ENCODE measurements at regions of chr2 and their contacts with region 1.

Region 1: GRCh38 chr2:153347818-153348495 is 130.6 kb downstream of the RPRM start:
- H3K4me3 ChIP-seq: no peak overlapping the region
- H3K27ac ChIP-seq: no peak overlapping the region
- H3K4me1 ChIP-seq: no peaks in the 10 kb centered on the region
- CTCF ChIP-seq: no peak

Region 2: GRCh38 chr2:153420394-153420793 is 72.4 kb after region 1 on chr2:
- CTCF ChIA-PET with region 1: no interaction called
- POLR2A ChIA-PET with region 1: no interaction called
- H3K4me3 ChIP-seq: no peak overlapping the region
- H3K27ac ChIP-seq: no peak overlapping the region
- H3K4me1 ChIP-seq: no peaks in the 10 kb centered on the region
- CTCF ChIP-seq: no peak

Region 3: GRCh38 chr2:153478334-153479261 is 130.6 kb after region 1 on chr2 and contains the start of gene RPRM:
- CTCF ChIA-PET with region 1: interaction called, 12 read pairs
- POLR2A ChIA-PET with region 1: interaction called, 14 read pairs
- H3K4me3 ChIP-seq: peak within 1 kb of the TSS; percentile 95
- H3K27ac ChIP-seq: peak within 1 kb of the TSS; percentile 98
- H3K4me1 ChIP-seq: peaks cover 23% of the 10 kb centered on the region
- CTCF ChIP-seq: peak; percentile 54

Measured in HEK293 (cell line).